ENCODE measurements at regions of chr18 and their contacts with region 1.

Region 1: DNA sequence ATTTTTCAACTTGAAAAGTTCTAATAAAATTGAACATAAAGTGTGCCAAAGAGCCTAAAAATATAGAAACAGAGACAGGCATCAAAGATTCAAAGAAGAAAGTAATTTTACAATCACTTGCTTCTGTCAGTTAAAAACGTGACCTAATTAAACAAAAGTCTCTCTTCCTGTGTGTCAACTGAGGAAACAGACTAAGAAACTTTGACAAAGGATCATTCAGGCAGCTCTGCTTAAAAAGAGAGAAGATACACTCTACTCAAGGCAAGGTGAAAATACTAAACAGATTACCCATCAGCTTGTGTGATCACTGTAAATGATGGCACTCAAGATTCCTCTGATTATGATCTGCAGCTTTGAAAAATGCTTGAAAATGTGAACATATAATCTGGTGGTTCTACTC is 47.8 kb downstream of the DYM start:
- DNase-seq: peak in 2 of 14 experiments; percentile 6 to 31
- ATAC-seq: peak; percentile 52
- H3K4me3 ChIP-seq: no peak overlapping the region
- H3K4me3 Mint-ChIP-seq: peak overlapping the region; percentile 18
- H3K27ac ChIP-seq: peak overlapping the region in 1 of 2 donors; percentile 9
- H3K27ac Mint-ChIP-seq: peak overlapping the region; percentile 82
- H3K4me1 ChIP-seq: no peaks in the 10 kb centered on the region
- H3K4me1 Mint-ChIP-seq: peaks cover 38% of the 10 kb centered on the region
- H3K27me3 ChIP-seq: no peaks in the 10 kb centered on the region
- H3K27me3 Mint-ChIP-seq: no peaks in the 10 kb centered on the region
- CTCF ChIP-seq: no peak

Region 2: GRCh38 chr18:49250816-49251388 is 161.8 kb before region 1 on chr18:
- CTCF ChIA-PET with region 1: no interaction called
- POLR2A ChIA-PET with region 1: no interaction called
- intact Hi-C with region 1: loop called (anchors 5 to 10 kb)
- DNase-seq: no peak
- ATAC-seq: no peak
- H3K4me3 ChIP-seq: no peak overlapping the region
- H3K4me3 Mint-ChIP-seq: no peak overlapping the region
- H3K27ac ChIP-seq: no peak overlapping the region
- H3K27ac Mint-ChIP-seq: no peak overlapping the region
- H3K4me1 ChIP-seq: no peaks in the 10 kb centered on the region
- H3K4me1 Mint-ChIP-seq: no peaks in the 10 kb centered on the region
- H3K27me3 ChIP-seq: no peaks in the 10 kb centered on the region
- H3K27me3 Mint-ChIP-seq: no peaks in the 10 kb centered on the region
- CTCF ChIP-seq: peak; percentile 52

Measured in CD4-positive, alpha-beta T cell (primary cell).